Activated CD4-positive, alpha-beta T cell treated with anti-CD3 and anti-CD28 coated beads, Interleukin-2, amount 10 ng/mL, durations not matched to agents 7 days and 5 days (primary cell): ENCODE measurements at regions of chr19 and their contacts with region 1.

Region 1: GRCh38 chr19:40425450-40426287 is at the start of gene SERTAD1:
- DNase-seq: peak; percentile 100
- H3K4me3 Mint-ChIP-seq: peak within 1 kb of the TSS; percentile 99
- H3K27ac Mint-ChIP-seq: peak within 1 kb of the TSS; percentile 98
- H3K4me1 Mint-ChIP-seq: peaks cover 33% of the 10 kb centered on the region
- H3K27me3 Mint-ChIP-seq: no peaks in the 10 kb centered on the region
- total RNA-seq, gene SERTAD1: 6.2 to 9.7 TPM

Region 2: DNA sequence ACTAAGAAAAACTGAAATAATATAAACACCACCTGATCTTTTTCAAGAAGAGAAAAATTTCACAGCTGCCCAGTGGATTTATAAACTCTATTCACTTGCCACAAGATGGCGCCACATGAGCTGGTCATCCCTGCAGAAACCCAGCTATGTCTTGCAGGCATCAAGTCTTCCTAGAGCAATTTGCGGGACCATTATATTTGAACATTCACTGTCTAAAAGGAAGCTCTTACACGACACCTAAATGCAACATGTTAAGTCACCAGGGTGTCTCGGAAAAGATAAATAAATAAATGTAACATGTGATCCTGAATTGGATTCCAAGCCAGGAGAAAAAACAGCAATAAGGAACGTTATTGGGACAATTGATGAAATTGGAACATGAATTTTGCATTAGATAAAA is 120.3 kb before region 1 on chr19:
- CTCF ChIA-PET with region 1: no interaction called
- POLR2A ChIA-PET with region 1: no interaction called
- DNase-seq: peak; percentile 90
- H3K4me3 Mint-ChIP-seq: no peak overlapping the region
- H3K27ac Mint-ChIP-seq: no peak overlapping the region
- H3K4me1 Mint-ChIP-seq: peaks cover 3% of the 10 kb centered on the region
- H3K27me3 Mint-ChIP-seq: no peaks in the 10 kb centered on the region

Region 3: DNA sequence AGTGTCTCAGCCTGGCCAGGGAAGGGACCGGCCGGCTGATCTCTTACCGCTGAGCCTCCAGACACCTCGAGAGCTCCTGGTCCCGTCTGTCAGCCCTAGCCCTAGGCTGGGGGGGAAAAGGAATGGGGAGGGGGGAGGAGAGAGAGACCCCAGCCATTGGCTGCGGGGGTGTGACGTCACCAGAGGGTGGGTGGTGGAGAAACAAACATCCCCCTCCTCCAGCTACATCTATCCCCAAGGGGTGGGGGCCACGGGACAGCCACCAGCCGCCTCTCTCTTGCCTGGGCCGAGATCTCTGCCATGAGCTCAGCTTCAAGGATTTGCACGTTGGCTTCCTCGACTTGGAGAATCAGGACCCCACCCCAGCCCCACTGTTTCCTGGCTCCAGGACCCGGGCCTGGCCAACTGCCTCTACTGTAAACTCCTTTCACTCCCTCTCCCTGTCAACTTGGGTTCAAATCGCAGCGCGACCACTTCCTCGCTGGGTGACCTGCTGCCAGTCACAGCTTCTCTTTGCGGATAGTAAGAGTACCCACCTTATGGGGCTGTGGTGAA is 12.3 kb before region 1 on chr19 and contains the start of gene PRX:
- CTCF ChIA-PET with region 1: interaction called, 19 read pairs
- POLR2A ChIA-PET with region 1: no interaction called
- DNase-seq: no peak
- H3K4me3 Mint-ChIP-seq: no peak within 1 kb of the TSS
- H3K27ac Mint-ChIP-seq: peak within 1 kb of the TSS; percentile 57
- H3K4me1 Mint-ChIP-seq: peaks cover 26% of the 10 kb centered on the region
- H3K27me3 Mint-ChIP-seq: no peaks in the 10 kb centered on the region
- total RNA-seq, gene PRX: 0.75 to 0.94 TPM

Region 4: GRCh38 chr19:40443131-40443810 is 17.6 kb after region 1 on chr19:
- CTCF ChIA-PET with region 1: interaction called, 20 read pairs
- POLR2A ChIA-PET with region 1: no interaction called
- DNase-seq: peak; percentile 100
- H3K4me3 Mint-ChIP-seq: peak overlapping the region; percentile 97
- H3K27ac Mint-ChIP-seq: peak overlapping the region; percentile 96
- H3K4me1 Mint-ChIP-seq: peaks cover 19% of the 10 kb centered on the region
- H3K27me3 Mint-ChIP-seq: no peaks in the 10 kb centered on the region

Region 5: GRCh38 chr19:40486017-40486416 is 60.3 kb after region 1 on chr19:
- CTCF ChIA-PET with region 1: no interaction called
- POLR2A ChIA-PET with region 1: no interaction called
- DNase-seq: no peak
- H3K4me3 Mint-ChIP-seq: no peak overlapping the region
- H3K27ac Mint-ChIP-seq: no peak overlapping the region
- H3K4me1 Mint-ChIP-seq: peaks cover 6% of the 10 kb centered on the region
- H3K27me3 Mint-ChIP-seq: peaks cover 9% of the 10 kb centered on the region